HepG2 (cell line): ENCODE measurements at regions of chr6 and their contacts with region 1.

Region 1: DNA sequence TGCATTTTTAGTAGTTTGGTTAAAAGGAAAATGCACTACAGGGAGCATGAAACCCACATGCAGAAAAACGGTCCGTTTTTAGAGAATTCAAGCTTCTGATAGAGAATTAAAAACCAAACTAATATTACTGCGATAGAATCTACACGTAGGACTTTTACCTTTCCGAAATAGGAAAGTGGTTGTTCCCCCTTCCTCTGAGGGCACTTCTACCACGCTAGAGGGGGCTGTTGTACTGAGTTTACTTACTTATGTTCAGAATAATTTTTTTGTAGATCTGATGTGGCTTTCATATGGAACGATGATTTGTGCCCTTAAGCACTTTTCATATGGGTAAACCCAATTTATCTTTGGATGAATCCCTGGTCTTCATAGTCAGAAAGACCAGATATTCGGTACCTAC is 264.3 kb upstream of the PLN start:
- DNase-seq: peak; percentile 59
- ATAC-seq: peak; percentile 83
- H3K4me3 ChIP-seq: no peak overlapping the region
- H3K27ac ChIP-seq: no peak overlapping the region
- H3K4me1 ChIP-seq: no peaks in the 10 kb centered on the region
- H3K27me3 ChIP-seq: no peaks in the 10 kb centered on the region
- CTCF ChIP-seq: peak; percentile 76
- EP300 ChIP-seq: no peak
- POLR2A ChIP-seq: no peak
- RAD21 ChIP-seq: peak; percentile 68

Region 2: GRCh38 chr6:117840541-117840983 is 443.2 kb before region 1 on chr6:
- CTCF ChIA-PET with region 1: no interaction called
- POLR2A ChIA-PET with region 1: no interaction called
- in situ Hi-C with region 1: no loop called
- intact Hi-C with region 1: loop called (anchors 5 kb)
- DNase-seq: peak; percentile 68
- ATAC-seq: peak; percentile 76
- H3K4me3 ChIP-seq: no peak overlapping the region
- H3K27ac ChIP-seq: no peak overlapping the region
- H3K4me1 ChIP-seq: no peaks in the 10 kb centered on the region
- H3K27me3 ChIP-seq: no peaks in the 10 kb centered on the region
- CTCF ChIP-seq: peak; percentile 55
- EP300 ChIP-seq: no peak
- POLR2A ChIP-seq: no peak
- RAD21 ChIP-seq: no peak; the same call in 1 of the 2 replicates

Region 3: DNA sequence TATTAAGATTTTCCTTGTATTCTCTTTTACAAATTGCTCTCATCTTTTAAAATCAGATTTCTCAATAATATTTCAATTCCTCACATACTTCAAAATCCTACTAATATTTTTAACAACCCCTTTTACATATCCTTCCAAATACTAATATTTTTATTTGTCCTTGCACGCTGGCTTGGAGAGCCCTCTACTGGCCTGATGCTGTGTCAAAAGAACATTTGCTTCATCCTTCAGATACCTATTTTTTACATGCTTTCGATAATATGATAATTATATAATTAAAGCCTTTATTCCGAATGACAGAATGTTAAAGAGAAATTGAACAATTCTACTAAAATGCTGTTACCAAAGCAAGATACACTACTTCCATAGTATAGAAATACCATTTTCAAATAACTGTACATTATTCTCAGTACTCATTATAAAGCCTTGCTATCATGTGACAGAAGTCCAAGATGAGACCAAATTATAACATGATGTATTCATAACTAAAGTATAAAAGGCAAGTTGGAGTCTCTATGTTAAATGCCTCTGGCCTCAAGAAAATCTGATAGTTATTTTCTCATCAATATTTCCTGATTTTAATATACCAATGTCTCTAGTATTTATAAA is 225.3 kb after region 1 on chr6:
- CTCF ChIA-PET with region 1: interaction called, 26 read pairs
- POLR2A ChIA-PET with region 1: no interaction called
- in situ Hi-C with region 1: loop called (anchors 5 kb)
- intact Hi-C with region 1: loop called (anchors 1 kb)
- DNase-seq: peak; percentile 26
- ATAC-seq: no peak
- H3K4me3 ChIP-seq: no peak overlapping the region
- H3K27ac ChIP-seq: no peak overlapping the region
- H3K4me1 ChIP-seq: no peaks in the 10 kb centered on the region
- H3K27me3 ChIP-seq: no peaks in the 10 kb centered on the region
- CTCF ChIP-seq: peak; percentile 66
- EP300 ChIP-seq: no peak
- POLR2A ChIP-seq: no peak
- RAD21 ChIP-seq: peak; percentile 66

Region 4: GRCh38 chr6:118551063-118552053 is 267.6 kb after region 1 on chr6:
- CTCF ChIA-PET with region 1: interaction called, 10 read pairs
- POLR2A ChIA-PET with region 1: no interaction called
- in situ Hi-C with region 1: no loop called
- intact Hi-C with region 1: loop called (anchors 1 kb)
- DNase-seq: peak; percentile 44
- ATAC-seq: peak; percentile 93
- H3K4me3 ChIP-seq: no peak overlapping the region
- H3K27ac ChIP-seq: no peak overlapping the region
- H3K4me1 ChIP-seq: no peaks in the 10 kb centered on the region
- H3K27me3 ChIP-seq: no peaks in the 10 kb centered on the region
- CTCF ChIP-seq: peak; percentile 60
- EP300 ChIP-seq: no peak
- POLR2A ChIP-seq: no peak
- RAD21 ChIP-seq: peak; percentile 48; the same call in 1 of the 2 replicates

Region 5: GRCh38 chr6:118580585-118581419 is 297.0 kb after region 1 on chr6:
- CTCF ChIA-PET with region 1: interaction called, 16 read pairs
- POLR2A ChIA-PET with region 1: no interaction called
- in situ Hi-C with region 1: no loop called
- intact Hi-C with region 1: loop called (anchors 1 kb)
- DNase-seq: peak; percentile 75
- ATAC-seq: peak; percentile 97
- H3K4me3 ChIP-seq: no peak overlapping the region
- H3K27ac ChIP-seq: no peak overlapping the region
- H3K4me1 ChIP-seq: no peaks in the 10 kb centered on the region
- H3K27me3 ChIP-seq: no peaks in the 10 kb centered on the region; a peak in 1 of 5 replicates
- CTCF ChIP-seq: peak; percentile 92
- EP300 ChIP-seq: no peak
- POLR2A ChIP-seq: no peak
- RAD21 ChIP-seq: peak; percentile 88

Region 6: DNA sequence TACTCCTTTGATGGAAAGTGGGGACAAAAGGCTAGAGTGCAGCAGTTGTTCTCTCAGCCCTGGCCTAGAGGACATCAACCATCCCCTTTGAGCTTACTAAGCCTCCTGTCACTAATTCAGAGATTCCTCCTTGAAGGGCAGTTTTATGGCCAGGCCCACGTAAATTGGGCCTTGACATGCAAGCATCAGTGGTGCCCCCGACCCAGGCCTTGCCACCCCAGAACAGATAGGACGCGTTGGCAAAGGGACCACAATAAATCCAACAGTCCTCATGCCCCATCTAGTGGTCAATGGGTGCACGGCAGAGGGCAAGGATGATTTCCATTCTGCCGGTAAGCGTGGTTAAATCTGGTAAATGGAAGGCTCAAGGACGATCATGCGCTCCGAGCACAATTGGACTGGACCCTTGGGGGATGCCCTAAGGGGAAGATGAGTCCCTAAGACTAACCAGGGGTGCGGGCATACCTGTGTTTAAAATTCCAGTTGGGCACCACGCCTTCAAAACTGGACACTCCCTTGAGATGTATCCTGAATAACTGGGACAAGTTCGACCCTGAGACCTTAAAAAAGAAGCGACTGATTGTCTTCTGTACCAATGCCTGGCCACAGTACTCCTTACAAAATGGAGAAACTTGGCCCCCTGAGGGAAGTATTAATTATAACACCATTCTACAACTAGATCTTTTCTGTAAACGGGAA is 335.1 kb after region 1 on chr6:
- CTCF ChIA-PET with region 1: no interaction called
- POLR2A ChIA-PET with region 1: no interaction called
- in situ Hi-C with region 1: no loop called
- intact Hi-C with region 1: loop called (anchors 1 kb)
- DNase-seq: peak; percentile 43
- ATAC-seq: peak; percentile 97
- H3K4me3 ChIP-seq: no peak overlapping the region
- H3K27ac ChIP-seq: no peak overlapping the region
- H3K4me1 ChIP-seq: no peaks in the 10 kb centered on the region
- H3K27me3 ChIP-seq: peaks cover 0 to 13% of the 10 kb centered on the region in 2 experiments; a peak in 2 of 5 replicates
- CTCF ChIP-seq: peak; percentile 95
- EP300 ChIP-seq: no peak
- POLR2A ChIP-seq: no peak
- RAD21 ChIP-seq: peak; percentile 59

Region 7: GRCh38 chr6:118735320-118735719 is 451.6 kb after region 1 on chr6:
- CTCF ChIA-PET with region 1: no interaction called
- POLR2A ChIA-PET with region 1: no interaction called
- in situ Hi-C with region 1: no loop called
- intact Hi-C with region 1: no loop called
- DNase-seq: peak; percentile 12
- ATAC-seq: peak; percentile 89
- H3K4me3 ChIP-seq: no peak overlapping the region
- H3K27ac ChIP-seq: no peak overlapping the region
- H3K4me1 ChIP-seq: no peaks in the 10 kb centered on the region
- H3K27me3 ChIP-seq: peaks cover 0 to 26% of the 10 kb centered on the region in 2 experiments; a peak in 2 of 5 replicates
- CTCF ChIP-seq: peak; percentile 54
- EP300 ChIP-seq: no peak
- POLR2A ChIP-seq: no peak
- RAD21 ChIP-seq: no peak

Region 8: GRCh38 chr6:118776607-118777549 is 493.1 kb after region 1 on chr6:
- CTCF ChIA-PET with region 1: no interaction called
- POLR2A ChIA-PET with region 1: no interaction called
- in situ Hi-C with region 1: no loop called
- intact Hi-C with region 1: loop called (anchors 2 kb)
- DNase-seq: peak; percentile 64
- ATAC-seq: peak; percentile 91
- H3K4me3 ChIP-seq: no peak overlapping the region
- H3K27ac ChIP-seq: no peak overlapping the region
- H3K4me1 ChIP-seq: no peaks in the 10 kb centered on the region
- H3K27me3 ChIP-seq: peaks cover 0 to 10% of the 10 kb centered on the region in 2 experiments; a peak in 3 of 5 replicates
- CTCF ChIP-seq: peak; percentile 70
- EP300 ChIP-seq: no peak
- POLR2A ChIP-seq: no peak
- RAD21 ChIP-seq: peak; percentile 47